ENCODE measurements at regions of chr17 and their contacts with region 1.

Region 1: DNA sequence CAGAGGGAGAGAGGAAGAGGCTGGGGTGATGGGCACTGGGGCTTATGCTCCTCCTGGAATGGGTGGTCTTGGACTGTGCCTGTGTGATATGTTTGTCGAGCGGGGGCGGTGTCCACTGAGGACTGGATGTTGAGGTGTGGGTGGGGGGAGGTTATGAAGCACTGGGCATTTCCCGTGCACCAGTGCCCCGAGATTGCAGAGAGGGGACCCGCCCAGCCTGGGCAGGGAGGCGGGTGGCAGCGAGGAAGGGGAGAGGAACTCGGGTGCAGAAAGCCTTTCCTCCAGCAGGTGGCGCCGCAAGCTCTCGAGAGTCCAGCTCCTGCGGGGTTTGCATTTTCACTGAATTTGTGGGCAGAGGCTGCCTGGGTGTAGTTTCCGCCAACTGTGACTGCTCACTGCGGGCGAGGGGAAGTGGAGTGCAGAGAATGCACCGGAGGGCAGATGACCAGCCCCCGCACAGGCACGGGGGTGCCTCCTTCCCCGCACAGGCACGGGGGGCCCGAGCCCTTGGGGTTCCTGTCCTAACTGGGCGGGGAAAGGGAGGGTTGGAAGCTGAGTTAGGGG is 190.6 kb downstream of the SEC14L1 start:
- DNase-seq: peak; percentile 91 to 96
- ATAC-seq: peak; percentile 77 to 84 (median 84)
- H3K4me3 ChIP-seq: peak overlapping the region; percentile 39
- H3K27ac ChIP-seq: peak overlapping the region; percentile 48
- H3K4me1 ChIP-seq: peaks cover 34% of the 10 kb centered on the region
- H3K27me3 ChIP-seq: no peaks in the 10 kb centered on the region
- CTCF ChIP-seq: peak; percentile 98

Region 2: GRCh38 chr17:77247048-77247541 is 84.3 kb before region 1 on chr17:
- intact Hi-C with region 1: no loop called
- DNase-seq: peak; percentile 87 to 93
- ATAC-seq: peak; percentile 92 to 98 (median 96)
- H3K4me3 ChIP-seq: peak overlapping the region; percentile 79
- H3K27ac ChIP-seq: peak overlapping the region; percentile 51
- H3K4me1 ChIP-seq: peaks cover 5% of the 10 kb centered on the region
- H3K27me3 ChIP-seq: peaks cover 0 to 5% (median 0%) of the 10 kb centered on the region in 3 donors
- CTCF ChIP-seq: peak; percentile 98

Region 3: GRCh38 chr17:77372444-77373298 is 41.3 kb after region 1 on chr17:
- intact Hi-C with region 1: loop called in 1 of 2 experiments (anchors 5 kb)
- DNase-seq: peak; percentile 83 to 90
- ATAC-seq: peak; percentile 44 to 53 (median 48)
- H3K4me3 ChIP-seq: peak overlapping the region; percentile 79
- H3K27ac ChIP-seq: peak overlapping the region; percentile 83
- H3K4me1 ChIP-seq: peaks cover 51% of the 10 kb centered on the region
- H3K27me3 ChIP-seq: no peaks in the 10 kb centered on the region
- CTCF ChIP-seq: no peak

Region 4: DNA sequence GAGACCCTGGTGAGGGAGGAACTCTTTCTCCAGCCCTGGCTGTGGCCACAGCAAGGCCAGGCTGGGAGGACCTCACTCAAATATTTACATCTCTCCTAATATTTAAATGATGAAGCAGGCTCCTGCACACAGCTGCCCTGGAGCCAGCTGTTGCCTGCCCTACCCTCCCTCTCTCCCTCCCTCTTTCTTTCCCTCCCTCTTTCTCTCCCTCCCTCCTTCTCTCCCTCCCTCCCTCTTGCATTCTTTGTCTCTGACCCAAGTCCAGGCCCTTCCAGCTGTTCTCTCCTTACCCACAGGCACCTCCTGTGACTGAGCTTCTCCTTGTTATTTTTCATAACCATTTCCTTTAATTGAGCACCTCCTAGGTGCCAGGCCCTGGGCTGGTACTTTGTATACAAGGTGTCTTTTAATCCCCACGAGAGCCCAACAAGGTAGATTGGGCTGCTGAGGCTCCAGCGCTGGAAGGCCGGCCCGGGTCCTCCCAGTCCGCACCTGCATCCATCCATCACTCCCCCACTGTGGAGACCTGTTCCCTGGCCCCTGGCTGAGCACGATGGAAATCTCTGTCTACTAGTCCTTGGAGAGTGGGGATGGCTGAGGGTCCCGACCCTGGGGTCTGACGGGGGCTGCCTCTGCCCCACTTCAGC is 51.7 kb after region 1 on chr17:
- intact Hi-C with region 1: no loop called
- DNase-seq: no peak
- ATAC-seq: peak; percentile 14 to 52 (median 32)
- H3K4me3 ChIP-seq: no peak overlapping the region
- H3K27ac ChIP-seq: peak overlapping the region; percentile 61
- H3K4me1 ChIP-seq: peaks cover 79% of the 10 kb centered on the region
- H3K27me3 ChIP-seq: no peaks in the 10 kb centered on the region
- CTCF ChIP-seq: no peak

Region 5: DNA sequence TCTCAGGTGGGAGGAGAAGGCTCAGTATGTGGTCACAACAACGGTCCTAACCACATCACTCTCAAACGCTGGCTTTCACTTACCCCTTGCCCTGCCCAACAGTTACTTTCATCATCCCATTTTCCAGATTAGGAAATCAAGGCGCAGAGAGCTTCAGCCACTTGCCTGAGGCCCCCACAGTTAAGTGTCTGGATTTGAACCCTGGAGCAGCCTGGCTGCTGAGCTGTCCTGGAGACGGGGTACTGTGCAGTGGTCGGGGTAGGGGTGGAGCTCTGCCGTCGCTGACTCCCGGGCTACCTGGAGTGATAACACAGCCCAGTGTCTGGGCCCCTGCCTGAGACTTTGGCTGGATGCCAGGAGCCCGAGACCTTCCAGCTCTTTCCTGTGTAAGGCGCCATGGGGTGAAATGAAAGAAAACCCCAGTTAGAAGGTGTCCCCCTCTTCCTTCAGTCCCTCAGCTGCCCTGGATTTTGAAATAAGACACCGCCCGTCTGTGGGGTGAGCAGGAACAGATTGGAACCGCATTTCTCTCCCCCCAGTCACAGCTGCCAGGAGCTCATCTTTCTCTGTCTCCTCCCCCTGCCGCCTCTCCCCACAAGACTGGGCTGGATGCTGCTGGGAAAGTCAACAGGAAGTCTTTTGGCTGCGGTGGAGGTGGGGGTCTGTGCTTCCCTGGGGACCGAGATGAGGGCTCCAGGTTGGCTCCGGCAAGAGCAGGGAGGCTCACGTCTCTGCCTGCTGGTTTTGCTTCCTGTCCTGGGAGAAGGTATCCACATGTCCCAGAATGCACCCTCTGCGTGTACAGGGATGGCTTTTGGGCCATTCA is 89.6 kb after region 1 on chr17:
- intact Hi-C with region 1: loop called (anchors 5 kb)
- DNase-seq: peak in 1 of 2 donors; percentile 18
- ATAC-seq: peak; percentile 23 to 46 (median 36)
- H3K4me3 ChIP-seq: peak overlapping the region; percentile 19
- H3K27ac ChIP-seq: peak overlapping the region; percentile 83
- H3K4me1 ChIP-seq: peaks cover 64% of the 10 kb centered on the region
- H3K27me3 ChIP-seq: no peaks in the 10 kb centered on the region
- CTCF ChIP-seq: no peak

Region 6: GRCh38 chr17:77494664-77495435 is 163.5 kb after region 1 on chr17:
- intact Hi-C with region 1: loop called (anchors 1 to 2 kb)
- DNase-seq: peak; percentile 79 to 87
- ATAC-seq: peak; percentile 69 to 78 (median 76)
- H3K4me3 ChIP-seq: no peak overlapping the region
- H3K27ac ChIP-seq: no peak overlapping the region
- H3K4me1 ChIP-seq: peaks cover 12% of the 10 kb centered on the region
- H3K27me3 ChIP-seq: no peaks in the 10 kb centered on the region
- CTCF ChIP-seq: peak; percentile 98